ENCODE measurements at regions of chr6 and their contacts with region 1.

Region 1: GRCh38 chr6:53244958-53245357 is 96.3 kb upstream of the GCM1 start:
- DNase-seq: peak; percentile 92
- ATAC-seq: peak; percentile 84
- H3K4me3 ChIP-seq: peak overlapping the region in 3 of 5 experiments; percentile 6 to 40 (median 14)
- H3K4me3 Mint-ChIP-seq: peak overlapping the region; percentile 62
- H3K27ac ChIP-seq: peak overlapping the region; percentile 87 to 94
- H3K27ac Mint-ChIP-seq: peak overlapping the region; percentile 89
- H3K4me1 ChIP-seq: peaks cover 78 to 85% of the 10 kb centered on the region in 2 donors
- H3K4me1 Mint-ChIP-seq: peaks cover 87% of the 10 kb centered on the region
- H3K27me3 ChIP-seq: no peaks in the 10 kb centered on the region
- H3K27me3 Mint-ChIP-seq: no peaks in the 10 kb centered on the region
- CTCF ChIP-seq: no peak

Region 2: GRCh38 chr6:53199156-53199555 is 45.8 kb before region 1 on chr6:
- CTCF ChIA-PET with region 1: interaction called, 5 read pairs
- POLR2A ChIA-PET with region 1: interaction called, 7 read pairs
- intact Hi-C with region 1: loop called (anchors 2 kb)
- DNase-seq: peak; percentile 79
- ATAC-seq: peak; percentile 95
- H3K4me3 ChIP-seq: peak overlapping the region in 1 of 5 experiments; percentile 46
- H3K4me3 Mint-ChIP-seq: peak overlapping the region; percentile 54
- H3K27ac ChIP-seq: peak overlapping the region; percentile 67 to 71
- H3K27ac Mint-ChIP-seq: peak overlapping the region; percentile 75
- H3K4me1 ChIP-seq: peaks cover 73 to 78% of the 10 kb centered on the region in 2 donors
- H3K4me1 Mint-ChIP-seq: peaks cover 65% of the 10 kb centered on the region
- H3K27me3 ChIP-seq: no peaks in the 10 kb centered on the region
- H3K27me3 Mint-ChIP-seq: no peaks in the 10 kb centered on the region
- CTCF ChIP-seq: no peak

Region 3: DNA sequence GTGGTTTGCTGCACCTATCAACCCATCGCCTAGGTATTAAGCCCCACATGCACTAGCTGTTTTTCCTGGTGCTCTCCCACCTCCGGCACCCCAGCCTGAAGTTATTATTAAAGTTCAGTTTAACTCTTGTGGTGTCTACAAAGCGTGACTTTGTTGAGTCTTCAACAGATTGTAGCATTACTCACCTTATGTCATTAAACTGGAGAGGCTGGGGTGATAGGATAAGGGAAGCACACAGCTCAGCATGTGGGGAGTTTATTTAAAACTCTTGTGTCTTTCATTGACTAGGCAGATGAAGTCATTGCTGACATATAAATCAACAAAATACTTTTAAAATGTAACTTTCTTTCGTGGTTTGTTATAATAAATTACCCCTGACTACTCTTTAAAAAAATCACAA is 11.6 kb before region 1 on chr6:
- CTCF ChIA-PET with region 1: interaction called, 7 read pairs
- POLR2A ChIA-PET with region 1: interaction called, 14 read pairs
- intact Hi-C with region 1: loop called (anchors 1 kb)
- DNase-seq: no peak
- ATAC-seq: no peak
- H3K4me3 ChIP-seq: no peak overlapping the region
- H3K4me3 Mint-ChIP-seq: no peak overlapping the region
- H3K27ac ChIP-seq: peak overlapping the region in 1 of 2 donors; percentile 1
- H3K27ac Mint-ChIP-seq: peak overlapping the region; percentile 47
- H3K4me1 ChIP-seq: peaks cover 69 to 74% of the 10 kb centered on the region in 2 donors
- H3K4me1 Mint-ChIP-seq: peaks cover 76% of the 10 kb centered on the region
- H3K27me3 ChIP-seq: no peaks in the 10 kb centered on the region
- H3K27me3 Mint-ChIP-seq: no peaks in the 10 kb centered on the region
- CTCF ChIP-seq: no peak

Region 4: GRCh38 chr6:53284901-53285300 is 39.9 kb after region 1 on chr6:
- CTCF ChIA-PET with region 1: interaction called, 5 read pairs
- POLR2A ChIA-PET with region 1: interaction called, 3 read pairs
- intact Hi-C with region 1: loop called (anchors 2 kb)
- DNase-seq: no peak
- ATAC-seq: no peak
- H3K4me3 ChIP-seq: no peak overlapping the region
- H3K4me3 Mint-ChIP-seq: peak overlapping the region; percentile 44
- H3K27ac ChIP-seq: peak overlapping the region in 1 of 2 donors; percentile 68
- H3K27ac Mint-ChIP-seq: peak overlapping the region; percentile 67
- H3K4me1 ChIP-seq: peaks cover 77 to 80% of the 10 kb centered on the region in 2 donors
- H3K4me1 Mint-ChIP-seq: peaks cover 86% of the 10 kb centered on the region
- H3K27me3 ChIP-seq: no peaks in the 10 kb centered on the region
- H3K27me3 Mint-ChIP-seq: no peaks in the 10 kb centered on the region
- CTCF ChIP-seq: no peak

Region 5: GRCh38 chr6:53306819-53307347 is 61.9 kb after region 1 on chr6:
- CTCF ChIA-PET with region 1: no interaction called
- POLR2A ChIA-PET with region 1: no interaction called
- intact Hi-C with region 1: no loop called
- DNase-seq: no peak
- ATAC-seq: peak; percentile 10
- H3K4me3 ChIP-seq: peak overlapping the region in 1 of 5 experiments; percentile 13
- H3K4me3 Mint-ChIP-seq: peak overlapping the region; percentile 55
- H3K27ac ChIP-seq: peak overlapping the region; percentile 12 to 86
- H3K27ac Mint-ChIP-seq: peak overlapping the region; percentile 82
- H3K4me1 ChIP-seq: peaks cover 73 to 77% of the 10 kb centered on the region in 2 donors
- H3K4me1 Mint-ChIP-seq: peaks cover 81% of the 10 kb centered on the region
- H3K27me3 ChIP-seq: no peaks in the 10 kb centered on the region
- H3K27me3 Mint-ChIP-seq: no peaks in the 10 kb centered on the region
- CTCF ChIP-seq: no peak

Region 6: GRCh38 chr6:53335208-53335994 is 90.4 kb after region 1 on chr6:
- CTCF ChIA-PET with region 1: no interaction called
- POLR2A ChIA-PET with region 1: no interaction called
- intact Hi-C with region 1: loop called (anchors 1 kb)
- DNase-seq: peak; percentile 93
- ATAC-seq: peak; percentile 88
- H3K4me3 ChIP-seq: peak overlapping the region; percentile 38 to 79 (median 58)
- H3K4me3 Mint-ChIP-seq: peak overlapping the region; percentile 80
- H3K27ac ChIP-seq: peak overlapping the region; percentile 98
- H3K27ac Mint-ChIP-seq: peak overlapping the region; percentile 97
- H3K4me1 ChIP-seq: peaks cover 81 to 89% of the 10 kb centered on the region in 2 donors
- H3K4me1 Mint-ChIP-seq: peaks cover 88% of the 10 kb centered on the region
- H3K27me3 ChIP-seq: no peaks in the 10 kb centered on the region
- H3K27me3 Mint-ChIP-seq: no peaks in the 10 kb centered on the region
- CTCF ChIP-seq: no peak

Region 7: DNA sequence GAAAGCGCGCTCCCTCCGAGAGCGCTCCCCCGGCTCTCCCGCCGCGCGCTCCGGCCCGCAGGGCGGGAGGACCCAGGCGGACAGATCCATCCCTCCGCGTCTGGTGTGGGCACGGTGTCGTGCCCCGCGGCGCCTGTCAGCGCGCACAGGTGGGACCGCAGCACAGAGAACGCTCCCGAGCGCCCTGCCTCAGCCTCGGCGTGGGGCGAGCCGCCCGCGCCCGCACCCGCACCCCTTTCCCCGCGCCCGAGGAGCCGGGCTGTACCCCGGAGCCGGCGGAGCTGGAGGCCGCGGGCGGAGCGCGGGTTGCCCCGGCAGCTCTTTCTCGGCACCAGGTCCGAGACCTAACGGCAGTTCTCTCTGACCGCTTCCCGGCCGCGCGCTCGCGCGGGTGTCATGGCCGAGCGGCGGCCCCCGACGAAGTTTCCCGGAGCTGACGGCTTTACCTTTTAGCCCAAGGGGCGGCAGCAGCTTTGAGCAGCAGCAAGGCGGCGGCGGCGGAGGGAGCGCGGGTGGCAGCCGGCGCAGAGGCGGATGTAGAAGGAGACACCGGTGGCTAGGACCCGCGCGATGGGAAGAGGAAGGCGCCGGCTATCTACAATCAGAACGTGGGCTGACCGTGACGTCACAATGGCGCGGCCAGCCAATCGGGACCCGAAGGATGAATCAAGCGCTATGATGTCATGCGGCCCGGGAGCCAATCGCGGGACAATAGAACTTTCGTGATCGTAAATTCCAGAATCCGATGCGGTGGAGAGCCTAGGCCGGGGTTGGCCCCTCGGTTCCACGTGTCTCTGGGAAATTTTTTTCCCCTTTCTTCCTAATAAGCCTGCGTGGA is 103.6 kb after region 1 on chr6 and contains the start of gene ELOVL5:
- CTCF ChIA-PET with region 1: interaction called, 3 read pairs
- POLR2A ChIA-PET with region 1: no interaction called
- intact Hi-C with region 1: loop called (anchors 1 kb)
- DNase-seq: peak; percentile 99
- ATAC-seq: peak; percentile 79
- H3K4me3 ChIP-seq: peak within 1 kb of the TSS; percentile 65 to 97 (median 86)
- H3K4me3 Mint-ChIP-seq: peak within 1 kb of the TSS; percentile 94
- H3K27ac ChIP-seq: peak within 1 kb of the TSS; percentile 84 to 91
- H3K27ac Mint-ChIP-seq: peak within 1 kb of the TSS; percentile 99
- H3K4me1 ChIP-seq: peaks cover 35 to 36% of the 10 kb centered on the region in 2 donors
- H3K4me1 Mint-ChIP-seq: peaks cover 59% of the 10 kb centered on the region
- H3K27me3 ChIP-seq: no peaks in the 10 kb centered on the region
- H3K27me3 Mint-ChIP-seq: no peaks in the 10 kb centered on the region
- CTCF ChIP-seq: no peak
- total RNA-seq, gene ELOVL5: 128 and 134 TPM in 2 replicates

Region 8: GRCh38 chr6:53461041-53461656 is 216.2 kb after region 1 on chr6:
- CTCF ChIA-PET with region 1: no interaction called
- POLR2A ChIA-PET with region 1: no interaction called
- intact Hi-C with region 1: loop called (anchors 5 kb)
- DNase-seq: peak; percentile 71
- ATAC-seq: peak; percentile 75
- H3K4me3 ChIP-seq: peak overlapping the region in 3 of 5 experiments; percentile 22 to 45 (median 34)
- H3K4me3 Mint-ChIP-seq: peak overlapping the region; percentile 54
- H3K27ac ChIP-seq: peak overlapping the region; percentile 90 to 93
- H3K27ac Mint-ChIP-seq: peak overlapping the region; percentile 97
- H3K4me1 ChIP-seq: peaks cover 80 to 88% of the 10 kb centered on the region in 2 donors
- H3K4me1 Mint-ChIP-seq: peaks cover 90% of the 10 kb centered on the region
- H3K27me3 ChIP-seq: no peaks in the 10 kb centered on the region
- H3K27me3 Mint-ChIP-seq: no peaks in the 10 kb centered on the region
- CTCF ChIP-seq: no peak

Measured in B cell (primary cell).